ENCODE measurements at regions of chr12 and their contacts with region 1.

Region 1: DNA sequence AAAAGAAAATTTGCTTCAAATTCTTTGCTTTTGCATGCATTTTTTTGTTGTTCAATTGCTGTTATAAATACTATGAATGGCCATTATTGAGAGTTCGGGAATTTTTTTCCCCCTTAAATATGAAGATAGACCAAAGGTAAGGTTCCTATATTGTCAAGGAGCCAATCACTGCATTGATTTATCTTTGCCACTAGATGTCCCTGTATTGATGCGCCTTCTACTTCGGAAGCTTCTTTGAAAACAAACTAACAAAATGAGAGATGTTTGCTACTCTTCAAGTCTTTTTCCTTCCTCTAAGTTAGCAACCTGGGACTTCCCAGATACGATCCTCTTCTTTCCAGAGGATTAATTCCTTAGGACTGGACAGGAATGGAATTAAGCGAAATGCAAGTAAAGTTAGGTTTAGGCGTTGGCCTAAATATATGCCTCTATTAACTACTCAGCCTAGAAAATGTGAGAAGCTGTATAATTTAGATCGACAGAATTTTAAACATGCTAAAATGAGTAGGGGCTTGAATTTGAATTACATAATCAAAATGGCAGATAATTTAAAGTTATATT is 318.1 kb downstream of the AEBP2 start:
- DNase-seq: no peak
- H3K4me3 Mint-ChIP-seq: no peak overlapping the region
- H3K27ac Mint-ChIP-seq: no peak overlapping the region
- H3K4me1 Mint-ChIP-seq: peaks cover 15% of the 10 kb centered on the region
- H3K27me3 Mint-ChIP-seq: peaks cover 4% of the 10 kb centered on the region

Region 2: DNA sequence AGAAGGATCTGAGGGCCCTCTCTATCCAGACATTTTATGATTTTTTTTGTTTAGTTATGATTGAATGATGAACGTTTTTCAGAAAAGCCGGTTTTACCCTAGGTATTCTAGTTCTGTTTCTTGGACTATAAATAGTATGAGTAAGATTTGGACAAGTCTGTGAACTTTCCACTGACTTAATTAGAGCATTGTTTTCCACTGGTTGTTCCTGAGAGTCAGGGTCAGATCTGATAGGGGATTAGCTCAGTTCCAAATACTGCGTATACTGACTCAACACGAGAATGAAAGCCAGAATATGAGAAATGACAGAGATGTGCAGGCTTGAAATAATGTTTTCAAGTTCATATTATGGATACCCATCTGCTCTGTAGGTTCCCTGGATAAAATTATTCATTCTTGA is 43.5 kb after region 1 on chr12:
- CTCF ChIA-PET with region 1: no interaction called
- POLR2A ChIA-PET with region 1: no interaction called
- intact Hi-C with region 1: loop called (anchors 2 kb)
- DNase-seq: no peak
- H3K4me3 Mint-ChIP-seq: no peak overlapping the region
- H3K27ac Mint-ChIP-seq: peak overlapping the region; percentile 1
- H3K4me1 Mint-ChIP-seq: peaks cover 26% of the 10 kb centered on the region
- H3K27me3 Mint-ChIP-seq: no peaks in the 10 kb centered on the region